Aorta (tissue), 5 donors: ENCODE measurements at regions of chr18 and their contacts with region 1.

Region 1: GRCh38 chr18:44123743-44124142 is 556.9 kb upstream of the SETBP1 start:
- DNase-seq: no peak
- ATAC-seq: no peak
- H3K4me3 ChIP-seq: no peak overlapping the region
- H3K27ac ChIP-seq: no peak overlapping the region
- H3K4me1 ChIP-seq: no peaks in the 10 kb centered on the region
- H3K27me3 ChIP-seq: no peaks in the 10 kb centered on the region

Region 2: GRCh38 chr18:44143072-44143471 is 19.3 kb after region 1 on chr18:
- intact Hi-C with region 1: no loop called
- DNase-seq: no peak
- ATAC-seq: no peak
- H3K4me3 ChIP-seq: no peak overlapping the region
- H3K27ac ChIP-seq: no peak overlapping the region
- H3K4me1 ChIP-seq: no peaks in the 10 kb centered on the region
- H3K27me3 ChIP-seq: no peaks in the 10 kb centered on the region

Region 3: DNA sequence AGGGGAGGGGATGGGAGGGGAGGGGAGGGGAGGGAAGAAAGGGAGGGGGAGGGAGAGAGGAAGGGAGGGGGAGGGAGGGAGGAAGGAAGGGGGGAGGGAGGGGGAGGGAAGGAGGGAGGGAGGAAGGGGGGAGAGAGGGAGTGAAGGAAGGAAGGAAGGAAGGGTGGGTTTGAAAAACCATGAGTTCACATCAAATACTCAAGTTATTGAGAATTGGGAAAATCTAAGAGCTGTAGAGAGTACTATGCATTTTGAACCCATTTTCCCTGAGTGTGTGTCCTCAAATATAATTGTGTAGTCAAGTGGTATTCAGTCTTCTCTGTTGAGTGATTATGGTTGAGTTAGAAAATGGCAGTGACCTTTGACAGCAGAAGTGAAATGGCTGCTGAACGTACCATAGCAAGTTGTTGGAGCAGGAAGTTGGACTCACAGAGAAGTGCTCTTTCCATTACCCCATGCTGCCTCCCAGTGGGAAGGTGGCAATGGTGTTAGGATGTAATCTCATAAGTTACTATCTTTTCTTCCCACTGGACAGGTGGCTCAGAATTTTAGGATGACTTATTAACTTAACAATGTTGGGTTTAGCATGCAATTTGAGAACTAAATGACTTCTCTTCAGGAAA is 771.5 kb after region 1 on chr18:
- intact Hi-C with region 1: loop called in 1 of 2 experiments (anchors 10 kb)
- DNase-seq: peak in 1 of 2 donors; percentile 58
- ATAC-seq: peak; percentile 63
- H3K4me3 ChIP-seq: no peak overlapping the region
- H3K27ac ChIP-seq: no peak overlapping the region
- H3K4me1 ChIP-seq: peaks cover 0 to 2% of the 10 kb centered on the region in 2 donors
- H3K27me3 ChIP-seq: no peaks in the 10 kb centered on the region

Region 4: GRCh38 chr18:45212181-45213039 is 1088.7 kb after region 1 on chr18:
- intact Hi-C with region 1: loop called in 1 of 2 experiments (anchors 10 kb)
- DNase-seq: peak; percentile 82 to 88
- ATAC-seq: peak; percentile 92
- H3K4me3 ChIP-seq: no peak overlapping the region
- H3K27ac ChIP-seq: no peak overlapping the region
- H3K4me1 ChIP-seq: no peaks in the 10 kb centered on the region
- H3K27me3 ChIP-seq: no peaks in the 10 kb centered on the region